A673 (cell line): ENCODE measurements at regions of chr19 and their contacts with region 1.

Region 1: GRCh38 chr19:46753420-46754155 is 7.3 kb upstream of the STRN4 start:
- DNase-seq: peak; percentile 74
- H3K4me3 ChIP-seq: no peak overlapping the region
- H3K27ac ChIP-seq: no peak overlapping the region
- H3K4me1 ChIP-seq: no peaks in the 10 kb centered on the region
- H3K27me3 ChIP-seq: no peaks in the 10 kb centered on the region
- CTCF ChIP-seq: peak; percentile 75

Region 2: DNA sequence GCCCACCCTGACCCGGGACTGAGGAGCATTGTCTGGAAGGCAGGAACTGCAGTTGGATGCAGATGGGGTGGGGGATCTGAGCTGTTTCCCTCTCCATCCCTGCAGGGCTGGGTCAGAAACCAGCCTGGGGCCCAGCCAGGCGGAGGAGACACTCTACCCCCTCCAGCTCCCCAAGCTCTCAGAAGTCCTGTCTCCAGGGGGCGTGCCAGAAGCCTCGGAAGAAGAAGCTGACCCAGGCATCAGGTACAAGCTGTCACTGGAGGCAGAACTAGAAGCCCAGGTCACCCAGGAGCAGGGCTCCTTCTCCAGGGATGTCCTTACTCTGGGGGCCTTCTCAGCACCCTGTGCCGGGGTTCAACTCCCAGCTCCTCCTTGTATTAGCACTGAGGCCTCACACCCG is 1000.0 kb before region 1 on chr19:
- CTCF ChIA-PET with region 1: interaction called, 11 read pairs
- POLR2A ChIA-PET with region 1: no interaction called
- intact Hi-C with region 1: no loop called
- DNase-seq: no peak
- H3K4me3 ChIP-seq: no peak overlapping the region
- H3K27ac ChIP-seq: no peak overlapping the region
- H3K4me1 ChIP-seq: no peaks in the 10 kb centered on the region
- H3K27me3 ChIP-seq: no peaks in the 10 kb centered on the region
- CTCF ChIP-seq: no peak

Region 3: GRCh38 chr19:46529622-46530462 is 223.7 kb before region 1 on chr19:
- CTCF ChIA-PET with region 1: interaction called, 7 read pairs
- POLR2A ChIA-PET with region 1: no interaction called
- intact Hi-C with region 1: loop called (anchors 5 kb)
- DNase-seq: peak; percentile 76
- H3K4me3 ChIP-seq: no peak overlapping the region
- H3K27ac ChIP-seq: no peak overlapping the region
- H3K4me1 ChIP-seq: peaks cover 10% of the 10 kb centered on the region
- H3K27me3 ChIP-seq: no peaks in the 10 kb centered on the region
- CTCF ChIP-seq: peak; percentile 93